K562 (cell line): ENCODE measurements at regions of chr10 and their contacts with region 1.

Region 1: DNA sequence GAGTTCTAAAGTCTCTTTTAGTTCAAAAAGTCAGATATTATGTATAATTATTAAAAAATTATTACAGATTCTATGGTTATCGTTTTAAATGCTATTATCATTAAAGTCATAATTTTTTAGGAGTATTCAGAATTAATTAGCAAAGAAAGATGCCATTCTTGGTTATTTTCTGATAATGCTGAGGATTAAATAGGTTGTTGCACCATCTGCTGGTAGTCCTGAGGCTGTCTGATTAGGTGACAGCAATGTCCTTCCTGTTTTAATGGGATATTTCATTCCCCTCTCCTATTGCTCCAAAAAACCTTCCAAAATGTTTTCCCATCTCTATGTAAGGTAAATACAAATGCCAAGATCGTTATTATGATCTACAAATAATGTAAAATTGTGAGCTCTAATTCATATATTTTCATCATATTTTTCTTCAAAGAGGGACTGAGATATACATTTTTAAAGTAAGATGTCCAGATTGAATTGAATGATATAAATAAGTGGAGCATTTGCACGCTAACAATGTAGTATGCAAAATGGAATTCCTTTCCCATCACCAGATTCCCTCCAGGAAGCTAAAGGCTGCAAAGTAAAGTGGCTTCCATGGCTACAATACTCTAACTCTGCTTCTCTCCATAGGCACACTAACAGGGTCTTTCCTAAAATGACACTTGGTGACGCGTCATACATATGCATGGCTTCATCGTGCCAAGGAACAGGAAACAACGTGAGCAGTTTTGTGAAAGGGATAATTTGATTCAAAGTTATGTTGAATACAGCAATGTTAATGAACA is 58.8 kb upstream of the AKR1E2 start:
- DNase-seq: peak in 2 of 4 experiments; percentile 11 to 21
- ATAC-seq: 0 out of 3 replicates have a peak, but pooled peaks have one; percentile 49
- H3K4me3 ChIP-seq: no peak overlapping the region
- H3K27ac ChIP-seq: no peak overlapping the region
- H3K4me1 ChIP-seq: no peaks in the 10 kb centered on the region
- H3K27me3 ChIP-seq: peaks cover 0 to 4% of the 10 kb centered on the region in 2 experiments; a peak in 1 of 5 replicates
- CTCF ChIP-seq: peak; percentile 27 to 68 (median 49); a peak in 4 of 6 replicates
- EP300 ChIP-seq: no peak
- POLR2A ChIP-seq: no peak
- RAD21 ChIP-seq: peak; percentile 77 to 86

Region 2: GRCh38 chr10:3197348-3198003 is 1569.7 kb before region 1 on chr10:
- CTCF ChIA-PET with region 1: interaction called, 5 read pairs
- POLR2A ChIA-PET with region 1: no interaction called
- in situ Hi-C with region 1: loop called (anchors 25 kb)
- intact Hi-C with region 1: loop called (anchors 5 kb)
- DNase-seq: peak; percentile 69 to 79 (median 74)
- ATAC-seq: peak; percentile 94
- H3K4me3 ChIP-seq: no peak overlapping the region
- H3K27ac ChIP-seq: no peak overlapping the region
- H3K4me1 ChIP-seq: peaks cover 0 to 8% of the 10 kb centered on the region in 2 experiments; a peak in 2 of 5 replicates
- H3K27me3 ChIP-seq: peaks cover 33 to 74% of the 10 kb centered on the region in 2 experiments
- CTCF ChIP-seq: peak; percentile 81 to 88 (median 86)
- EP300 ChIP-seq: peak; percentile 54; the same call in 1 of the 2 replicates
- POLR2A ChIP-seq: no peak
- RAD21 ChIP-seq: peak; percentile 85 to 90

Region 3: GRCh38 chr10:3222065-3222464 is 1545.2 kb before region 1 on chr10:
- CTCF ChIA-PET with region 1: no interaction called
- POLR2A ChIA-PET with region 1: no interaction called
- in situ Hi-C with region 1: loop called (anchors 25 kb)
- intact Hi-C with region 1: no loop called
- DNase-seq: peak in 2 of 4 experiments; percentile 15 to 49
- ATAC-seq: peak; percentile 55; the same call in 2 of the 3 replicates
- H3K4me3 ChIP-seq: no peak overlapping the region
- H3K27ac ChIP-seq: no peak overlapping the region
- H3K4me1 ChIP-seq: no peaks in the 10 kb centered on the region; a peak in 1 of 5 replicates
- H3K27me3 ChIP-seq: peaks cover 0 to 6% of the 10 kb centered on the region in 2 experiments; a peak in 3 of 5 replicates
- CTCF ChIP-seq: peak; percentile 32 to 70 (median 45); a peak in 5 of 6 replicates
- EP300 ChIP-seq: no peak
- POLR2A ChIP-seq: no peak
- RAD21 ChIP-seq: peak; percentile 48 to 82; a peak in 3 of 4 replicates

Region 4: GRCh38 chr10:3239066-3239919 is 1527.9 kb before region 1 on chr10:
- CTCF ChIA-PET with region 1: interaction called, 4 read pairs
- POLR2A ChIA-PET with region 1: no interaction called
- in situ Hi-C with region 1: no loop called
- intact Hi-C with region 1: loop called (anchors 5 kb)
- DNase-seq: peak; percentile 56 to 72 (median 60)
- ATAC-seq: peak; percentile 96
- H3K4me3 ChIP-seq: no peak overlapping the region
- H3K27ac ChIP-seq: no peak overlapping the region
- H3K4me1 ChIP-seq: peaks cover 0 to 8% of the 10 kb centered on the region in 2 experiments; a peak in 1 of 5 replicates
- H3K27me3 ChIP-seq: peaks cover 39 to 88% of the 10 kb centered on the region in 2 experiments
- CTCF ChIP-seq: peak; percentile 81 to 90 (median 86)
- EP300 ChIP-seq: no peak
- POLR2A ChIP-seq: no peak
- RAD21 ChIP-seq: peak; percentile 87 to 92